Dendritic cell treated with granulocyte-macrophage colony-stimulating factor and Interleukin-4, amounts not matched to agents 40 ng/mL and 50 ng/mL, for 4 days (primary cell): ENCODE measurements at regions of chr1 and their contacts with region 1.

Region 1: DNA sequence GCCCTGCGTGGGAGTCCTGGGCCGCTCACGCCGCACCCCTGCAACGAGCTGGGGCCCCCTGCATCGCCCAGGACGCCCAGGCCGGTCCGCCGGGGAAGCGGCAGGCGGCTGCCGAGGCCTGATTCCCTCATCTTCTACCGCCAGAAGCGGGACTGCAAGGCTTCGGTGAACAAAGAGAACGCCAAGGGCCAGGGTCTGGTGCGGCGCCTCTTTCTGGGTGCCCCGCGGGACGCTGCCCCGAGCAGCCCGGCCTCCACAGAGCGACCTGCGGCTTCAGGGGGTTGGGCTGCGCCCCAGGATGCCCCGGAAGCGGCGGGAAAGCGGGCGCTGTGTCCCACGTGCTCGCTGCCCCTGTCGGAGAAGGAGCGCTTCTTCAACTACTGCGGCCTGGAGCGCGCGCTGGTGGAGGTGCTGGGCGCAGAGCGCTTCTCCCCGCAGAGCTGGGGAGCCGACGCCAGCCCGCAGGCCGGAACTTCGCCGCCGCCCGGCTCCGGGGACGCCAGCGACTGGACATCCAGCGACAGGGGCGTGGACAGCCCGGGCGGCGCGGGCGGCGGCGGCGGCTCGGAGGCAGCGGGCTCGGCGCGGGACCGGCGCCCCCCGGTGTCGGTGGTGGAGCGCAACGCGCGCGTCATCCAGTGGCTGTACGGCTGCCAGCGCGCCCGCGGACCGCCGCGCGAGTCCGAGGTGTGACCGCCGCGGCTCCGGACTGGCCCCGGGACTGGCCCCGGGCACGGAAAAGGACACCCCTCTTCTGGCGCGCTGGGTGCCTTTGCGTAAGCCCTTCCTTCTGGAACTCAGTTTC is 2.7 kb downstream of the FAM110D start:
- H3K4me3 Mint-ChIP-seq: peak overlapping the region; percentile 73
- H3K27ac Mint-ChIP-seq: no peak overlapping the region
- H3K4me1 Mint-ChIP-seq: peaks cover 31% of the 10 kb centered on the region
- H3K27me3 Mint-ChIP-seq: peaks cover 83% of the 10 kb centered on the region

Region 2: GRCh38 chr1:26035959-26036755 is 125.5 kb before region 1 on chr1:
- intact Hi-C with region 1: loop called (anchors 5 kb)
- H3K4me3 Mint-ChIP-seq: peak overlapping the region; percentile 93
- H3K27ac Mint-ChIP-seq: peak overlapping the region; percentile 81
- H3K4me1 Mint-ChIP-seq: peaks cover 35% of the 10 kb centered on the region
- H3K27me3 Mint-ChIP-seq: peaks cover 59% of the 10 kb centered on the region

Region 3: GRCh38 chr1:26111530-26112406 is 49.8 kb before region 1 on chr1 and contains the start of gene PDIK1L:
- intact Hi-C with region 1: loop called (anchors 5 kb)
- H3K4me3 Mint-ChIP-seq: peak within 1 kb of the TSS; percentile 95
- H3K27ac Mint-ChIP-seq: peak within 1 kb of the TSS; percentile 88
- H3K4me1 Mint-ChIP-seq: peaks cover 10% of the 10 kb centered on the region
- H3K27me3 Mint-ChIP-seq: no peaks in the 10 kb centered on the region

Region 4: GRCh38 chr1:26306290-26307229 is 144.9 kb after region 1 on chr1 and contains the start of gene UBXN11:
- intact Hi-C with region 1: no loop called
- H3K4me3 Mint-ChIP-seq: peak within 1 kb of the TSS; percentile 90
- H3K27ac Mint-ChIP-seq: peak within 1 kb of the TSS; percentile 84
- H3K4me1 Mint-ChIP-seq: peaks cover 63% of the 10 kb centered on the region
- H3K27me3 Mint-ChIP-seq: no peaks in the 10 kb centered on the region

Region 5: GRCh38 chr1:26761217-26761616 is 599.6 kb after region 1 on chr1:
- intact Hi-C with region 1: no loop called
- H3K4me3 Mint-ChIP-seq: no peak overlapping the region
- H3K27ac Mint-ChIP-seq: peak overlapping the region; percentile 41
- H3K4me1 Mint-ChIP-seq: peaks cover 4% of the 10 kb centered on the region
- H3K27me3 Mint-ChIP-seq: no peaks in the 10 kb centered on the region